ENCODE measurements at regions of chr2 and their contacts with region 1.

Region 1: DNA sequence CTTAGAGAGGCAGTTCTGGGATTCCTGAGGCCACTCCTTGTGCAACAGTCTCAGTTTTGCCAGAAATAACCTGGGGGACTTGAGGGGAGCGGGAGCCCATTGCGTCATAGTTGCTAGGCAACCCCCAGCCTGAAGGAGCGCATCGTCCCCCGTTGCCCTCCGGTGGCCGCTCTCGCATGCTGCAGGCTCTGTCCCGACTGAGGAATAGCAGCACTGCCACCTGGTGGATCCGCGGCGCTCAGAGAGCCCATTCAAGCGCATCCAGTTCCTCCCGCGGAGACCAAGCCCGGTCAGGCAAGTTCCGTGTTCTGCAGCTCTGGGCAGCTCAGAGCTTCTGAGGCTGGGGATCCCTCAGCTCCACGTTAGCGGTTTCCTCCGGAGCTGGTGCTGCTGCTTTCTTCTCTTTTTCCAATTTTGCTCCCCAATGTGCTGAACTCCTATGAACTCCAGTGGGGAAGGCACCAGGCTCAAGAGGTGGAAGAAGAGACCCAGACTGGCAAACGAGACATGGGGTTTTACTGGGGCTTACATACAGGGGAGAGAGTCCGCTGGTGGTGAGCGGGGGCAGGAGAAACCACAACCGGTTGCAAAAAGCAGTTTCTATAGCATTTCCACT is 15.1 kb downstream of the SLC4A3 start:
- DNase-seq: peak; percentile 94
- H3K4me3 ChIP-seq: no peak overlapping the region
- H3K27ac ChIP-seq: no peak overlapping the region
- H3K4me1 ChIP-seq: peaks cover 0 to 12% (median 1%) of the 10 kb centered on the region in 4 donors
- H3K27me3 ChIP-seq: no peaks in the 10 kb centered on the region
- CTCF ChIP-seq: peak; percentile 95 to 100 (median 99)
- EP300 ChIP-seq: no peak
- POLR2A ChIP-seq: no peak

Region 2: DNA sequence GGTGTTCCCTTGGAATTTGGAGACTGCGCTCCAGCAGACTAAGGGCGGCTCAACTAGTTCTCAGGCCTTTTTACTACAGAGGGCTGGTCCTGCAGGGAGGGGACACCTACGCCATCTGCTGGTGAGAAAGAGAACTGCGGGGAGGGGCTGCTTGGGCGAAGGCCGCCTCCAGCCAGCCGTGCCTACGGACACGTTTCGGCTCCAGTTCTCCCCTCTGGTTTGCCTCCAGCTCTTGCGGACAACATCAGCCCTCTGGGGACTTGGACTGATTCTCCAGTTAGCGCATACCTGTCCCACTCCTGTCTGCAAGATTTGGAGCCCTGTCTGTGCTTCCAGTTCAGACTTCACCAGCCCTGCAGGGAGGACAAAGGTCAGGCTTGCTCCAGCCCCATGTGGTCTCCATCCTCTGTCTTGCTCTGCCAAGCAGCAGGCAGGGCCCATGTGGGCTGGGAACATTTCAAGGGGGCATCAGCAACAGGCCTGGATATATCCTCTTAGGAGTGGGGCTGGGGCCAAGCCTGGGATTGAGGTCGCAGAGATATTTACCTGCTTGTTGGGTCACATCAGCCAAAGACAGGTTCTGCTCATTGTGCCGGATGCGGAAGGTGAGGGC is 343.7 kb before region 1 on chr2:
- in situ Hi-C with region 1: no loop called
- intact Hi-C with region 1: no loop called
- DNase-seq: peak; percentile 93
- H3K4me3 ChIP-seq: no peak overlapping the region
- H3K27ac ChIP-seq: no peak overlapping the region
- H3K4me1 ChIP-seq: peaks cover 3 to 19% (median 12%) of the 10 kb centered on the region in 4 donors
- H3K27me3 ChIP-seq: peaks cover 43% of the 10 kb centered on the region
- CTCF ChIP-seq: peak; percentile 96 to 100 (median 100)
- EP300 ChIP-seq: no peak
- POLR2A ChIP-seq: no peak

Region 3: DNA sequence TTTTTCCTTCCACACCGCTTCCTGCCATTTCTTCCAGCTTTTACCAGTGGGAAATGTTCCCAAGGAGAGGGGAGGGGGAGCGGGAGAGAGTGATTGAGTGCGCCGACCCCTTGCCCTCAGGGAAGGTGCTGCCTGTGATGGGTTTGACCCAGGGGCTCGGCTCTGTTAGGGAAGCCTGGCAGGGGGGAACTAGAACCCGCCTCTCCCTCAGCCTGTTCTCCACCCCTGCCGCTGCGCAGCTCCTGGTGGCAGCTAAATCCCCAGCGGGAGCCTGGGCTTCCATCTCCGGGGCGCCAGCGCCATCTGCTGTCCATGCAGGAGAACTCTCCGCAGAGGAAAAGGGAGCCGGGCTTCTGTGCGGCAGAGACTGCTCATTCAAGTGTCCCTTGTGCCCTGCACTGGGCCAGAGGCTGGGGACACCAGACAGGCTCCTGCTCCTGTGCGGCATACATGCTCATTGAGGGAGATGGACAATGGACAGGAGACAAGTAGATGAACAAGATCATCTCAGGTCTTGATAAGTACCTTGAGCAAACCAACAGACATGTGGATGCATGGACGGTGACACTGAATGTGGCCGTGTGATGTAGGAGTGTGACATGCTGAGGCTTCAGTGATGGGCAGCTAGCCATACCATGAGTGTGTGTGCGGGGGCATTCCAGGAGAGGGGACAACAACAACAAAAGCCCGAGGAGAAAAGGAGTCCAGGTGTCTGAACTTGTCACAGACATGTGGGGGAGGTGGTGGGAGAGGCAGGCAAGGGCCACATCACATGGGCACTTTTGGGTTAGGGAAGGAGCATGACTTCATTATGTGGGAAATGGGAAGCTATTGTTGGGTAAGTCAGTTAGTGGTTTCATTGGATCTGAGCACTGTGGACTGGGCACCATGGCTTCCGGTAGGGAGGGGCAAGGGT is 112.3 kb before region 1 on chr2:
- in situ Hi-C with region 1: loop called in 2 of 4 experiments (anchors 10 kb)
- intact Hi-C with region 1: no loop called
- DNase-seq: peak; percentile 84
- H3K4me3 ChIP-seq: no peak overlapping the region
- H3K27ac ChIP-seq: no peak overlapping the region
- H3K4me1 ChIP-seq: peaks cover 0 to 5% (median 0%) of the 10 kb centered on the region in 4 donors
- H3K27me3 ChIP-seq: peaks cover 63% of the 10 kb centered on the region
- CTCF ChIP-seq: peak; percentile 95 to 98 (median 97)
- EP300 ChIP-seq: no peak
- POLR2A ChIP-seq: no peak

Region 4: GRCh38 chr2:219552382-219553167 is 90.0 kb before region 1 on chr2:
- in situ Hi-C with region 1: no loop called
- intact Hi-C with region 1: loop called (anchors 5 kb)
- DNase-seq: peak; percentile 90
- H3K4me3 ChIP-seq: peak overlapping the region; percentile 39 to 72 (median 57)
- H3K27ac ChIP-seq: peak overlapping the region; percentile 45 to 61 (median 58)
- H3K4me1 ChIP-seq: peaks cover 5 to 19% (median 12%) of the 10 kb centered on the region in 4 donors
- H3K27me3 ChIP-seq: peaks cover 32% of the 10 kb centered on the region
- CTCF ChIP-seq: no peak
- EP300 ChIP-seq: no peak
- POLR2A ChIP-seq: no peak